PC-3 (cell line): ENCODE measurements at regions of chr13 and their contacts with region 1.

Region 1: DNA sequence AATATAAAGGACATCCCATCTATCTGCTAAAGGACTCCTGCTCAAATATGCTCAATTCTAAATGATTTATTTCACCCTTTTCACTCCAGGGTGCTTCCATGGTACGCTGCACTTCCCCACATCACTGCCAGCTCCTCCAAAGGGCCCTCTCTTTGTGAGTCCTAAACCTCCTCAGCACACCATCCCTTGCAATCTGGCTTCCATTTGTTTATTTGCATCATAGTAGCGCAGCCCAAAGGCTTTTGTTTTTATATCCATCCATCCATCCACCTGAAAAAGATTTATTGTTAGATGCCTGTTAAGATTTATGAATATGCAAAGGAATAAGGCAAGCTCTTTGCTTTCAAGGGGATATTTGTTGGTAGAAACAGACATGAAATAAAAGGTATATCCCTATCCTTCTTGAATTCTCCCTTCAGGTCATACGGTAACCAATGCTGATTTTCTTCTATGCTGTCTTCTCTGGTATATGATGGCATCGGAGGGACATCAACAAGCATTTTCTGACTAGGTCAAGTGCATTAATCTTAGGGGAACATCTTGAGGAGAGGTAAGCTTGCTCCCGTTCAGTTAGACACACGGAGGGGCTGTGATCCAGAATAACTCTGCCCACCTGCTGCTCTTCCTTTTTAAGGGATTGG is 397.6 kb downstream of the LIG4 start:
- DNase-seq: no peak
- ATAC-seq: no peak
- H3K4me3 ChIP-seq: no peak overlapping the region
- H3K27ac ChIP-seq: peak overlapping the region; percentile 91; the same call in 1 of the 2 replicates
- H3K4me1 ChIP-seq: peaks cover 34% of the 10 kb centered on the region
- H3K27me3 ChIP-seq: no peaks in the 10 kb centered on the region
- CTCF ChIP-seq: no peak

Region 2: DNA sequence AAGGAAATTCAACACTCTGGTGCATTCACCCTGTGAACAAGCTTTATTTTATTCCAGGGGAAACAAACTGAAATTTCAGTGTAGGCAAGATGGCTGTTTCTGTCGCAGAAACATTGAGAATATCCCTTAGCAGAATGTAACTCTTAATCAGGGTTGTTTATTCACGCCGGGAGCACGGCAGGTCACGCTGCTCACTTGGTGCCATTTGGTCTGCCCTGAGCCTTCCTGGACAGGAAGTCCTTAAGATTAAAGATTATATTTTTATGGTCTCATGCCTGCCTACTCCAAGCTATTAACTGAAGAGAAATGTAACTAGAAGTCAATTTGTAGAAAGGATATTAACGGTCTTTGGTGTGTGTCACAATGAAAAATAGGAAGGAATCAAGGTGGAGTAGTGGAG is 1064.5 kb before region 1 on chr13:
- CTCF ChIA-PET with region 1: no interaction called
- POLR2A ChIA-PET with region 1: interaction called, 17 read pairs
- intact Hi-C with region 1: no loop called
- DNase-seq: no peak
- ATAC-seq: no peak
- H3K4me3 ChIP-seq: no peak overlapping the region
- H3K27ac ChIP-seq: no peak overlapping the region
- H3K4me1 ChIP-seq: no peaks in the 10 kb centered on the region
- H3K27me3 ChIP-seq: peaks cover 70% of the 10 kb centered on the region
- CTCF ChIP-seq: no peak

Region 3: DNA sequence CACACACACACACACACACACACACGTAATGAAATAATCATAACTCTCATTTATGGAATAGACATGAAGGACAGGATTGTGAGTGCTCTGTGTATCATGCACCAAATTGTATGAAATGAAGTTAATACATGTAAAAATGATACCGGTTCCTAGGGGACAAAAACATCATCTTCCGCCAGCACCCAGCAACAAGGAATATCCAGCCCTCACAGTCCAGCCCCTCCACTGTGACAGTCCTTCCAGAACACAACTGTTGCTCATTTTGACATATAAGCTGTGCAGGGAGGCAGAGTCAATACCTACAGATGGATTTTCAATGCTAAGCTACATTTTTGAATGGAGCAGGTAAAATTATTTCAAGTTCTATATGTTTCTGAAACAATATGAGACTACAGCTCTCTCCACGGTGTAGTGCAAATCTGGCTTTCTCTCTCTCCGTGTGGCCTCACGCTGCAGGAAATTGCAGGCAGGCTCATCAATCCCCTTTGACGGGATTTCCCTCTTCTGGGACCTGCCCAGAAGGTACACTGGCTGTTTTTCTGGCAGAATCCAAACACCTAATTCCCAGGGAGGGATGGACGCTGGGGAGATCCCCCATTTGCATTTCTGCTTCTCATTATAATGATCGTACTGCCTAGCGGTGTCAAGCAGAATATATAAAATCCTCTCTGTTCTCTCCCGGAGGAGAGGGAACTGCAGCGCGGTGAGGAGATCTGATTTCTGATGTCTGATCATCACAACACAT is 96.5 kb before region 1 on chr13:
- CTCF ChIA-PET with region 1: no interaction called
- POLR2A ChIA-PET with region 1: no interaction called
- intact Hi-C with region 1: no loop called
- DNase-seq: no peak
- ATAC-seq: no peak
- H3K4me3 ChIP-seq: no peak overlapping the region
- H3K27ac ChIP-seq: no peak overlapping the region
- H3K4me1 ChIP-seq: no peaks in the 10 kb centered on the region
- H3K27me3 ChIP-seq: no peaks in the 10 kb centered on the region
- CTCF ChIP-seq: no peak

Region 4: GRCh38 chr13:107743983-107744382 is 73.8 kb before region 1 on chr13:
- CTCF ChIA-PET with region 1: no interaction called
- POLR2A ChIA-PET with region 1: no interaction called
- intact Hi-C with region 1: loop called (anchors 5 kb)
- DNase-seq: peak; percentile 27
- ATAC-seq: peak; percentile 64
- H3K4me3 ChIP-seq: peak overlapping the region; percentile 51; the same call in 1 of the 2 replicates
- H3K27ac ChIP-seq: peak overlapping the region; percentile 68
- H3K4me1 ChIP-seq: peaks cover 31% of the 10 kb centered on the region
- H3K27me3 ChIP-seq: no peaks in the 10 kb centered on the region
- CTCF ChIP-seq: no peak